ENCODE measurements at regions of chr13 and their contacts with region 1.

Region 1: GRCh38 chr13:87671031-87671752 is at the start of gene SLITRK5:
- DNase-seq: peak; percentile 16
- ATAC-seq: peak; percentile 97
- H3K4me3 ChIP-seq: peak within 1 kb of the TSS; percentile 13
- H3K27ac ChIP-seq: no peak within 1 kb of the TSS
- H3K4me1 ChIP-seq: no peaks in the 10 kb centered on the region
- H3K27me3 ChIP-seq: peaks cover 25% of the 10 kb centered on the region
- CTCF ChIP-seq: peak; percentile 68
- POLR2A ChIP-seq: no peak
- RAD21 ChIP-seq: peak; percentile 29; the same call in 1 of the 2 replicates
- total RNA-seq, gene SLITRK5: under 0.01 TPM in 2 replicates

Region 2: DNA sequence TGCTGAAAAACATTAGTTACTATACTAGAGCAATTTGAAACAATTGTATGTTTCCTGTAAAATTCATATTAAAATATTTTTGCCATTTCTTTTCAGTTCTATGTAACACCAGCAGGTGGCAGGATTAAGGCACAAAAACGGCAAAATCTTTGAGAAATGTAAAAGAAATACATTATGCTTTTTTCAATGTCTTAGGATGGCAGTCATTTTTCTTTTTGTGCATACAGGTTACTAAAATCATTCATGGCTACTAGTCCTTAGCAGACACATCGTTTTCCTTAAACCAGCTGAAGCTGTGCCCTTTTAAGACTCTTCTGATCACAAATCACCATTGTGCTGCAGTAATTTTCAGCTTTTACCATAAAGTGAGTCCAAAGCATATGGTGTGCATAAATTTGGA is 800.7 kb before region 1 on chr13:
- CTCF ChIA-PET with region 1: no interaction called
- POLR2A ChIA-PET with region 1: no interaction called
- dilution Hi-C with region 1: no loop called
- in situ Hi-C with region 1: no loop called
- intact Hi-C with region 1: loop called (anchors 1 kb)
- DNase-seq: peak; percentile 43
- ATAC-seq: peak; percentile 42
- H3K4me3 ChIP-seq: no peak overlapping the region
- H3K27ac ChIP-seq: no peak overlapping the region
- H3K4me1 ChIP-seq: no peaks in the 10 kb centered on the region
- H3K27me3 ChIP-seq: no peaks in the 10 kb centered on the region
- CTCF ChIP-seq: peak; percentile 72
- POLR2A ChIP-seq: no peak
- RAD21 ChIP-seq: peak; percentile 71

Measured in IMR-90 (cell line).